ENCODE measurements at regions of chr11 and their contacts with region 1.

Region 1: DNA sequence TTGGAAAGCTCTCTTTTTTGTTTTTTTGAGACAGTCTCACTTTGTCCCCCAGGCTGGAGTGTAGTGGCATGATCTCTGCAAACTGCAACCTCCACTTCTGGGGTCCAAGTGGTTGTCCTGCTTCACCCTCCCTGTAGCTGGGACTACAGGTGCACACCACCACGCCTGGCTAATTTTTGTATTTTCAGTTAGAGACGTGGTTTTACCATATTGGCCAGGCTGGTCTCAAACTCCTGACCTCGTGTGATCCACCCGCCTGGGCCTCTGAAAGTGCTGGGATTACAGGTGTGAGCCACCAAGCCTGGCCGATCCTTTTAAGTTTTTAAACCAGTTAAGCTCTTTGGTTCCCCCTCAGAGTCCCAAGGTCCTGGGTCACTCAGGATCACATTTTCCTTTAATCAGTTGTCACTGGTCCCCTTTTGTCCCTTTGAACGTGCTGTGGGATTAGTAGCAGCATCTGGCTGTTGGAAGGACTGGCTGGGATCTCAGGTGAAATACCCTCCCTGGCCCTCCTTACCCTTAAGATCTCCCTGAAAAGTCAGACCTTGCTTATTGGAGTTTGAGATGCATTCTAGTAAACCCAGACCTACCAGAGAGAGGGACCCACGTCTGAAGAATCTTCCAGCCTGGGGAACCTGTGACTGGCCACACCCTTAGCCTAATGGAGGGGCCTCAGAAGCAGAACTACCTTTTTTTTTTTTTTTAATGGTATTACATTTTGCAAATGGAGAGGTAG is 8.1 kb downstream of the MALAT1 start:
- DNase-seq: peak; percentile 71
- H3K4me3 ChIP-seq: peak overlapping the region; percentile 79
- H3K27ac ChIP-seq: peak overlapping the region; percentile 98
- H3K4me1 ChIP-seq: peaks cover 65% of the 10 kb centered on the region
- CTCF ChIP-seq: no peak

Region 2: GRCh38 chr11:65169164-65169641 is 337.7 kb before region 1 on chr11:
- CTCF ChIA-PET with region 1: no interaction called
- POLR2A ChIA-PET with region 1: no interaction called
- intact Hi-C with region 1: no loop called
- DNase-seq: peak; percentile 48
- H3K4me3 ChIP-seq: no peak overlapping the region
- H3K27ac ChIP-seq: peak overlapping the region; percentile 54
- H3K4me1 ChIP-seq: peaks cover 32% of the 10 kb centered on the region
- CTCF ChIP-seq: no peak

Region 3: GRCh38 chr11:65382033-65382807 is 124.7 kb before region 1 on chr11 and contains the start of gene SLC25A45:
- CTCF ChIA-PET with region 1: no interaction called
- POLR2A ChIA-PET with region 1: interaction called, 6 read pairs
- intact Hi-C with region 1: loop called (anchors 1 kb)
- DNase-seq: peak; percentile 86
- H3K4me3 ChIP-seq: peak within 1 kb of the TSS; percentile 68
- H3K27ac ChIP-seq: peak within 1 kb of the TSS; percentile 52
- H3K4me1 ChIP-seq: peaks cover 51% of the 10 kb centered on the region
- CTCF ChIP-seq: peak; percentile 84
- total RNA-seq, gene SLC25A45: 5.9 and 7.0 TPM in 2 replicates

Region 4: GRCh38 chr11:65487413-65488272 is 19.3 kb before region 1 on chr11:
- CTCF ChIA-PET with region 1: no interaction called
- POLR2A ChIA-PET with region 1: interaction called, 199 read pairs
- intact Hi-C with region 1: no loop called
- DNase-seq: peak; percentile 80
- H3K4me3 ChIP-seq: peak overlapping the region; percentile 37
- H3K27ac ChIP-seq: peak overlapping the region; percentile 65
- H3K4me1 ChIP-seq: peaks cover 62% of the 10 kb centered on the region
- CTCF ChIP-seq: peak; percentile 71